GM12878 (cell line): ENCODE measurements at regions of chr6 and their contacts with region 1.

Region 1: GRCh38 chr6:391559-392440 is at the start of gene IRF4:
- DNase-seq: no peak
- ATAC-seq: peak; percentile 63
- H3K4me3 ChIP-seq: peak within 1 kb of the TSS; percentile 95
- H3K27ac ChIP-seq: peak within 1 kb of the TSS; percentile 97
- H3K4me1 ChIP-seq: peaks cover 33% of the 10 kb centered on the region
- H3K27me3 ChIP-seq: no peaks in the 10 kb centered on the region
- CTCF ChIP-seq: no peak
- EP300 ChIP-seq: no peak
- POLR2A ChIP-seq: peak; percentile 77
- RAD21 ChIP-seq: peak; percentile 25; the same call in 1 of the 2 replicates
- polyA plus RNA-seq, gene IRF4: 50.0 to 98.9 TPM

Region 2: GRCh38 chr6:341914-342831 is 49.6 kb before region 1 on chr6:
- CTCF ChIA-PET with region 1: interaction called, 4 read pairs
- POLR2A ChIA-PET with region 1: interaction called, 8 read pairs
- RAD21 ChIA-PET with region 1: interaction called, 31 read pairs
- SMC1A ChIA-PET with region 1: interaction called, 49 read pairs
- in situ Hi-C with region 1: no loop called
- intact Hi-C with region 1: loop called (anchors 2 kb)
- DNase-seq: peak; percentile 92
- ATAC-seq: peak; percentile 72
- H3K4me3 ChIP-seq: peak overlapping the region; percentile 46; the same call in 1 of the 2 replicates
- H3K27ac ChIP-seq: peak overlapping the region; percentile 86
- H3K4me1 ChIP-seq: peaks cover 88% of the 10 kb centered on the region
- H3K27me3 ChIP-seq: no peaks in the 10 kb centered on the region
- CTCF ChIP-seq: no peak
- EP300 ChIP-seq: peak; percentile 99
- POLR2A ChIP-seq: no peak
- RAD21 ChIP-seq: 0 out of 2 replicates have a peak, but pooled peaks have one; percentile 34

Region 3: DNA sequence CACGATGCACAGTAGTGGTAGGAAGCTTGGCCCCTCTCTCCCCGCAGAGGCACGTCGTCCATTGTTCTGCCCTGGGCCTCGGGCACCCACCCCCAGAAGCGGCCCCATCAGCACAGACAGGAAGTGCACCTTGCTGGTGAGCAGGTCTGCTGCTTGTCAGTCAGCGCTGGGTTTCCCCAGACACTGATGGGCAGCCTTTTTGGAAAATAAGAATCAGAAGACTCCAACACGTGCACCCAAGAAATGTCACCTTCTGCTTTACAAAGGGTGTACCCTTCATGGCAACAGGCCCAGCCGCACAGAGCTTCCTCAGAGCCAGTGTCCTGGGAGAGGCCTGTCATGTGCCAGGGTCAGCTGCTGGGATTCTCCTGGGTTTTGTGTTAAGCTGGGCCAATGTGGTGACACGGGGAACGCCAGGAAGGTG is 35.0 kb before region 1 on chr6:
- CTCF ChIA-PET with region 1: interaction called, 5 read pairs
- POLR2A ChIA-PET with region 1: interaction called, 5 read pairs
- RAD21 ChIA-PET with region 1: interaction called, 10 read pairs
- SMC1A ChIA-PET with region 1: interaction called, 9 read pairs
- in situ Hi-C with region 1: no loop called
- intact Hi-C with region 1: no loop called
- DNase-seq: no peak
- ATAC-seq: peak; percentile 80
- H3K4me3 ChIP-seq: no peak overlapping the region
- H3K27ac ChIP-seq: peak overlapping the region; percentile 56
- H3K4me1 ChIP-seq: peaks cover 45% of the 10 kb centered on the region
- H3K27me3 ChIP-seq: no peaks in the 10 kb centered on the region
- CTCF ChIP-seq: no peak
- EP300 ChIP-seq: no peak
- POLR2A ChIP-seq: no peak
- RAD21 ChIP-seq: no peak

Region 4: GRCh38 chr6:364609-365540 is 26.9 kb before region 1 on chr6:
- CTCF ChIA-PET with region 1: interaction called, 3 read pairs
- POLR2A ChIA-PET with region 1: interaction called, 14 read pairs
- RAD21 ChIA-PET with region 1: interaction called, 30 read pairs
- SMC1A ChIA-PET with region 1: interaction called, 24 read pairs
- in situ Hi-C with region 1: no loop called
- intact Hi-C with region 1: loop called (anchors 2 kb)
- DNase-seq: peak; percentile 78
- ATAC-seq: peak; percentile 94
- H3K4me3 ChIP-seq: no peak overlapping the region
- H3K27ac ChIP-seq: peak overlapping the region; percentile 33
- H3K4me1 ChIP-seq: peaks cover 25% of the 10 kb centered on the region
- H3K27me3 ChIP-seq: no peaks in the 10 kb centered on the region
- CTCF ChIP-seq: no peak
- EP300 ChIP-seq: peak; percentile 37 to 88; a peak in 2 of 4 replicates
- POLR2A ChIP-seq: no peak
- RAD21 ChIP-seq: 0 out of 2 replicates have a peak, but pooled peaks have one; percentile 2

Region 5: DNA sequence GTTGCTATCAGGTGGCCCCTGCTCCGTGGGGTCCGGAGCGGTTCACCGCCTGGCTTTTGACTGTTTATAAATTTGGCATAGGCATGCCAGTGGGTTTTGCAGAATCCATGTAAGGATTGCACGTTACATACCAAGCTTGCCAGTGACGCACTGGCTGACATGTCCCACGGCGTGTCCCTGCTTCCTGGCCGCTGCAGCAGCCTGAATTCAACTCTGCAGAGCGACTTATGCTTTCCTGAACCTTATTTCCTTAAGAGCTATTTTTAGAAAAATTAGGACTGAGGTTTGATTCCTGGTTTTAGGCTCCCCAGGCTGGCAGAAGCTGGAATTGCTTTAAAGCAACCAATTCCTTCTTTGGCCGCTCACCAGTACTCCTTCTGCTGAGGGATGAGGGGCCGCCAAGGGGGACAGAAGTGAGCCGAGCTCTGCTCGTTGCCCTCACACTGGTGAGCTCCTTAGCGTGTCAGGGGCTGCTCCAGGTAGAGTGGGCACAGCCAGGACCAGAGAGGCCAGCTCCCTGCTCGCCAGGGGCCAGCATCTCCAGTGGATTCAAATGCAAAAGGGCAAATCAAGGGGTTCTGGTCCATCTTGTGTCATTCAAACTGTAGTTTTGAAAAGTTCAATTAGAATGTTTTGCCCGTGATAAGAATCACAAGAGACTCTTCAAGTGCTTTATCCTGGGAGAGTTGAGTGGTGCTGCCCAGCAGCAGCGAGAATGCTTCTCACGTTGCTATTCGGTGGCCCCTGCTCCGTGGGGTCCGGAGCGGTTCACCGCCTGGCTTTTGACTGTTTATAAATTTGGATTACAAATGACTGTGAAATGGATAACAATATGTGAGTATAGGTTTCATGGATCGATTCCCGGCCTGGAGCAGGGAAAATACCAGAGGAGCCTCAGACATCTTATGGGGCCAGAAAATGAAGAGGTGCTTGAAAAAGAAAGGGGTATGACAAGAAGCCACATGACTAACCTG is 17.8 kb before region 1 on chr6:
- CTCF ChIA-PET with region 1: interaction called, 8 read pairs
- POLR2A ChIA-PET with region 1: interaction called, 4 read pairs
- RAD21 ChIA-PET with region 1: interaction called, 7 read pairs
- SMC1A ChIA-PET with region 1: interaction called, 13 read pairs
- in situ Hi-C with region 1: no loop called
- intact Hi-C with region 1: no loop called
- DNase-seq: no peak
- ATAC-seq: no peak
- H3K4me3 ChIP-seq: no peak overlapping the region
- H3K27ac ChIP-seq: no peak overlapping the region
- H3K4me1 ChIP-seq: peaks cover 35% of the 10 kb centered on the region
- H3K27me3 ChIP-seq: no peaks in the 10 kb centered on the region
- CTCF ChIP-seq: no peak
- EP300 ChIP-seq: no peak
- POLR2A ChIP-seq: no peak
- RAD21 ChIP-seq: no peak

Region 6: DNA sequence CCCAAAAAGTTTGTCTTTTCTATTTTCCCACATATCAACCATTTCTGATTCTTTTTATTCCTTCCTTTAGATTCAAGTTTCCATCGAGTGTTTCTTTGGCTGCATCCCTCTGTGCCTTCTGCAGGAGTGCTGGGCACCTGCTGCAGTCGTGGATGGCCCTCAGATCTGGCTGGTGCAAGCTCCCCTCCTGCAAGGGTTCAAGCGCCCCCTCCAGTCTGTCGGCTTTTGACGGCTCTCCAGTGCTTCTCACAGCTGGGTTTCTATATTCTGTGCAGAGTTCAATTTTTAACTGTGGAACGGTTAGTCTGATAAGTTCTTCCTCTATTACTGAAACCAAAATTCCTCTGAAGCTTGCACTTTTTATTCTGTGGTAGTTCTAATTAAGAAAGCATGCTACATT is 133.0 kb after region 1 on chr6:
- CTCF ChIA-PET with region 1: interaction called, 4 read pairs
- POLR2A ChIA-PET with region 1: no interaction called
- RAD21 ChIA-PET with region 1: interaction called, 11 read pairs
- SMC1A ChIA-PET with region 1: no interaction called
- in situ Hi-C with region 1: no loop called
- intact Hi-C with region 1: no loop called
- DNase-seq: no peak
- ATAC-seq: peak; percentile 85
- H3K4me3 ChIP-seq: no peak overlapping the region
- H3K27ac ChIP-seq: no peak overlapping the region
- H3K4me1 ChIP-seq: no peaks in the 10 kb centered on the region
- H3K27me3 ChIP-seq: no peaks in the 10 kb centered on the region
- CTCF ChIP-seq: peak; percentile 14 to 39 (median 36); a peak in 4 of 6 replicates
- EP300 ChIP-seq: no peak
- POLR2A ChIP-seq: no peak
- RAD21 ChIP-seq: peak; percentile 51

Region 7: DNA sequence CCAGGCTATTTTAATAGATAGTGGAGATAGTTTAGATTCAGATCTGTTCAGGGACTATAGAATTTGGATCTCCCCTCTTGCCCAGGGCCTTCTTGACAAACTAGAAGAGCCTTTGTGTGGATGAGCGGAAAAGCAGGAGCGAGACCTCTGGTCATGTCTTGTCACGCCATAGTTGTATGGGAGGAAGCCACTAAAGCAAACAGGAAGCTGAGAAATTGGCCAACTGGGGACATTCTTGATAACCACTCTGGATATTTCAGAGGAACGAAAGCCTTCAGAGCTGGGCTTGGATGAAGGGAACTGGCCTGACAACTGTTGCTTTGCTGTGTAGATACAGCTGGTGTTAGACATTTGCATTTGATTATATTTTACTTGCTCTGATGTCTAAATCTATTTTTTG is 355.2 kb after region 1 on chr6:
- CTCF ChIA-PET with region 1: no interaction called
- POLR2A ChIA-PET with region 1: no interaction called
- RAD21 ChIA-PET with region 1: no interaction called
- SMC1A ChIA-PET with region 1: no interaction called
- in situ Hi-C with region 1: no loop called
- intact Hi-C with region 1: no loop called
- DNase-seq: no peak
- ATAC-seq: no peak
- H3K4me3 ChIP-seq: no peak overlapping the region
- H3K27ac ChIP-seq: no peak overlapping the region
- H3K4me1 ChIP-seq: no peaks in the 10 kb centered on the region
- H3K27me3 ChIP-seq: no peaks in the 10 kb centered on the region
- CTCF ChIP-seq: no peak
- EP300 ChIP-seq: no peak
- POLR2A ChIP-seq: no peak
- RAD21 ChIP-seq: no peak